Activated CD4-positive, alpha-beta T cell treated with anti-CD3 and anti-CD28 coated beads, Interleukin-2, amount 10 ng/mL, durations not matched to agents 24 days and 14 days (primary cell): ENCODE measurements at regions of chr5 and their contacts with region 1.

Region 1: DNA sequence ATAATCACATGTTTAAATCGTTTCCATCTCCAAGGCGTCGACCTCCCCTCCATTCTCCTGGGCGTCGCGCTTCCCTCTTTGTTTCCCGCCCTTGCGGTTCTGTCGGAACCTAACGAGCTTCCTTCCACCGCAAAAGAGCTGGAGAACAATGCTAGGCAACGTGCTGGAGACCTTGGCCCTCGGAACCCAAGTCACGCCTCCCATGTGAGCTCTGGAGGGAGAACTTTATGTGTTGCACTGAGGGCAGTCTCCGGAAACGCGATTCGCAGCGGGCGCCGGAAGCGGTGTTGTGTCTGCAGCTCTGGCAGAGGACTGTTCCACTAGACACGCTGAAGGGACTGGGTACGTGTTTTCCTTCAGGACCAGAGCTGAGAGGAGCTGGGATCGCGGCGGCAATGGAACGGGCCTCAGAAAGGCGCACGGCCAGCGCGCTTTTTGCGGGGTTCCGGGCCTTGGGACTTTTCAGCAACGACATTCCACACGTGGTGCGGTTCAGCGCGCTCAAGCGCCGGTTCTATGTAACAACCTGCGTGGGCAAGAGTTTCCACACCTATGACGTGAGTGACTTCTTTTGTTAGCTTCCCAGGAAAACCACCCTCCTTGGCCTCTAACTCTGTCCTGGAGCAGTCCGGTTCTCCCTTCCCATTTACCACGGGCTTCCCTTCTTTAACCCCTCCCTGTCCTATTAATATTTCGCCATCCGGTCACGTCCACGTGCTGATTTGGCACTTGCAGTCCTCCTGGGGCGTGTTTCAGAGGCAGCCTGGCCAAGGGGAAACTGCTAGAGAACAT is at the start of gene WDR36:
- DNase-seq: peak; percentile 97
- H3K4me3 Mint-ChIP-seq: peak within 1 kb of the TSS; percentile 96
- H3K27ac Mint-ChIP-seq: peak within 1 kb of the TSS; percentile 98
- H3K4me1 Mint-ChIP-seq: peaks cover 22% of the 10 kb centered on the region
- H3K27me3 Mint-ChIP-seq: peaks cover 2% of the 10 kb centered on the region
- total RNA-seq, gene WDR36: 90.1 and 97.7 TPM in 2 replicates

Region 2: DNA sequence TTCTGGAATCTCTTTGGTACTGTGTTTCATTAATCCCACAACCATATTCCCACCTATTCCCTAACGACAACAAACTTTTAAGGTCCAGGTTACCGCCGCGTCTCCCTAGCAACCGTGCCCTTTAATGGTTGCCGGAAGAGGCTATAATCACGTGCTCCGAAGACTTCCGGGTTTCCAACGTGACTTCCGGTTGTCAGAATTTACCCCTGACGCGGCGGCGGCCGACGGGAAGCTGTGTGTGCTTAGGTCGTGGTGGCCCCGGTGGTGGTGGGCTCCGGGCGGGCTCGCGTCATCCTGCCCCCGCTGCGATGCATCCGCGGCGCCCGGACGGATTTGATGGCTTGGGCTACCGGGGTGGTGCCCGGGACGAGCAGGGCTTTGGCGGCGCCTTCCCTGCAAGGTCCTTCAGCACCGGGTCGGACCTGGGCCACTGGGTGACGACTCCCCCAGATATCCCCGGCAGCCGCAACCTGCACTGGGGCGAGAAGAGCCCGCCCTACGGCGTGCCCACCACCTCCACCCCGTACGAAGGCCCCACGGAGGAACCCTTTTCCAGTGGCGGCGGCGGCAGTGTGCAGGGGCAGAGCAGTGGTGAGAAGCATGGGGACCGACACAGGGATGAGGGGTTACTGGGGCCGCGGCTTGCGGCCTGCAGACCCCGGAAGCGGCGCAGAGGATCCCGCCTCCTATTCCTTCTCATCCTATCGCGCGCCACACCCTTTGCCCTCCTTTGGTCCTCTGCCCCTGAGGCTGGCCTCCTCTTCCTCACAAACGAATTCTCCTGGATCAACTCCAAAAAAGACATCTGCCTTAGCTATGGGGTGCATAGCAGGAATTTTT is 353.2 kb before region 1 on chr5 and contains the start of gene SLC25A46:
- intact Hi-C with region 1: loop called (anchors 1 kb)
- DNase-seq: peak; percentile 97
- H3K4me3 Mint-ChIP-seq: peak within 1 kb of the TSS; percentile 97
- H3K27ac Mint-ChIP-seq: peak within 1 kb of the TSS; percentile 96
- H3K4me1 Mint-ChIP-seq: peaks cover 24% of the 10 kb centered on the region
- H3K27me3 Mint-ChIP-seq: peaks cover 14% of the 10 kb centered on the region
- total RNA-seq, gene SLC25A46: 47.0 and 49.4 TPM in 2 replicates

Region 3: GRCh38 chr5:110751902-110752762 is 340.1 kb before region 1 on chr5:
- intact Hi-C with region 1: loop called (anchors 1 kb)
- DNase-seq: peak; percentile 85
- H3K4me3 Mint-ChIP-seq: peak overlapping the region; percentile 62
- H3K27ac Mint-ChIP-seq: peak overlapping the region; percentile 93
- H3K4me1 Mint-ChIP-seq: peaks cover 42% of the 10 kb centered on the region
- H3K27me3 Mint-ChIP-seq: no peaks in the 10 kb centered on the region

Region 4: GRCh38 chr5:111004286-111004685 is 88.0 kb before region 1 on chr5:
- intact Hi-C with region 1: no loop called
- DNase-seq: no peak
- H3K4me3 Mint-ChIP-seq: no peak overlapping the region
- H3K27ac Mint-ChIP-seq: no peak overlapping the region
- H3K4me1 Mint-ChIP-seq: no peaks in the 10 kb centered on the region
- H3K27me3 Mint-ChIP-seq: peaks cover 3% of the 10 kb centered on the region

Region 5: DNA sequence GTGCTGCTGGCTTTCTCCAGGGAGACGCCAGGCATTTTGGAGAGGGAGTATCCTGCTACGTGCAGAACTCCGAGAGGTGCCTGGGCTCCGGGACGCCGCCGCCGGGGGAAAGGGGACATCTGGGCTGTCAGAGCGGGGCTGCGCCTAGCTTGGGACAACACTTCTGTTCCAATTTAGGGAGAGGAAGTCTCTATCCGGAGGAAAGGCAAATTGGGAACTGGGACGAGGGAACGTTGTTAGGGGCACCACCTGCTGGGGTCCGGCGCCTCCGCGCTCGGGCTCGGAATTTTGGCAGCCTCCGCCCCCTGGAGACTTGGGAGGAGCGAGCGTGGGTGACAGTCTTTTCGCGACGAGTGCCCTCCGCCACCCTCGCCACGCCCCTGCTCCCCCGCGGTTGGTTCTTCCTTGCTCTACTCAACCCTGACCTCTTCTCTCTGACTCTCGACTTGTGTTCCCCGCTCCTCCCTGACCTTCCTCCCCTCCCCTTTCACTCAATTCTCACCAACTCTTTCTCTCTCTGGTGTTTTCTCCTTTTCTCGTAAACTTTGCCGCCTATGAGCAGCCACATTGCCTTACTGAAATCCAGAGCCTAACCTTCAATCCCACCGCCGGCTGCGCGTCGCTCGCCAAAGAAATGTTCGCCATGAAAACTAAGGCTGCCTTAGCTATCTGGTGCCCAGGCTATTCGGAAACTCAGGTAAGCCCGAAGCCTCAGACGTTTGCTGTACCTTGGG is 19.1 kb before region 1 on chr5:
- intact Hi-C with region 1: loop called (anchors 2 kb)
- DNase-seq: peak; percentile 88
- H3K4me3 Mint-ChIP-seq: peak overlapping the region; percentile 93
- H3K27ac Mint-ChIP-seq: no peak overlapping the region
- H3K4me1 Mint-ChIP-seq: peaks cover 22% of the 10 kb centered on the region
- H3K27me3 Mint-ChIP-seq: peaks cover 71% of the 10 kb centered on the region

Region 6: GRCh38 chr5:111119856-111120255 is 27.6 kb after region 1 on chr5:
- intact Hi-C with region 1: loop called (anchors 2 kb)
- DNase-seq: no peak
- H3K4me3 Mint-ChIP-seq: no peak overlapping the region
- H3K27ac Mint-ChIP-seq: no peak overlapping the region
- H3K4me1 Mint-ChIP-seq: peaks cover 22% of the 10 kb centered on the region
- H3K27me3 Mint-ChIP-seq: no peaks in the 10 kb centered on the region

Region 7: DNA sequence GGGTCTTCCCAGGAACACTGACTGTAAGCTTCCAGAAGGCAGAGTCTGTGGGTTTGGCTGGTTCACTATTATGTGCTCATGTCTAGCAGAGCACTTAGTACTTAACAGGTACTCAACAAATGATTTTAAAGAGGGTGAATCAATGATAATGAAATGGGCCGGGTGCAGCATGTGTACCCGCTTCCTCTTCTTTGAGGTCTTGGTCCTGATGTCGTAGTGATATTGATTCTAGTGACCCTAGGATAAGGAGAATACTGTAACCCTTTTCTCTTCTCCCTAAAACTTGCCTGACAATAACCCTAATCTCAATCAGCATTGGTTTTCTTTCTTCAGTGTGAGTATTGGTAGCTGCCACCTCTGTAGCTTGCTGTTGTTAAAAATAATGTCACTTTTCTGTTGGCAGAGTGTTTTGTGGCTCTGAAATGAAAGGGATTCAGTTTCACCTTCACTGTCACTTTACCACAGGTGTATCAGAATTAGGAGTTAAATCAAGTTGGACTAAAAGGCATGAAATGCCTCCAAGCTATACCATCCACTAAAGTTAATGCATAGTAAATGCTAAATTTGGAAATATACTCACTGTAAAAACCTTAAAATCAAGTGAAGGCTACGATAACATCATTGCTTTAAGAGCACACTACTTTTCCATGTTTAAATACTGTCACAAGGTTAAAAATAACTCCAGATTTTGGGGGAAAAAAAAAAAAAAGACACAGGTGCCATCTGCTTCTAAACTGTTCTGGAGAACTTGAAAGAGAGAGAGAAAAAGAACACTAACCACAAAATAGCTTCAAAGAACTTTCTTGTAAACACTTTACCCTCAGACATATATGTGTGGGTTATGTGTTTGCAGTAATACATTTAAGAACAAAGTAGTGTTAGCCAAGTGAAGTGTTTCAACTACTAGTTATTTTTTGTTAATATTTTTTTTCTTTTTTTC is 137.9 kb after region 1 on chr5:
- intact Hi-C with region 1: loop called (anchors 5 kb)
- DNase-seq: peak; percentile 75
- H3K4me3 Mint-ChIP-seq: peak overlapping the region; percentile 86
- H3K27ac Mint-ChIP-seq: peak overlapping the region; percentile 98
- H3K4me1 Mint-ChIP-seq: peaks cover 74% of the 10 kb centered on the region
- H3K27me3 Mint-ChIP-seq: no peaks in the 10 kb centered on the region

Region 8: DNA sequence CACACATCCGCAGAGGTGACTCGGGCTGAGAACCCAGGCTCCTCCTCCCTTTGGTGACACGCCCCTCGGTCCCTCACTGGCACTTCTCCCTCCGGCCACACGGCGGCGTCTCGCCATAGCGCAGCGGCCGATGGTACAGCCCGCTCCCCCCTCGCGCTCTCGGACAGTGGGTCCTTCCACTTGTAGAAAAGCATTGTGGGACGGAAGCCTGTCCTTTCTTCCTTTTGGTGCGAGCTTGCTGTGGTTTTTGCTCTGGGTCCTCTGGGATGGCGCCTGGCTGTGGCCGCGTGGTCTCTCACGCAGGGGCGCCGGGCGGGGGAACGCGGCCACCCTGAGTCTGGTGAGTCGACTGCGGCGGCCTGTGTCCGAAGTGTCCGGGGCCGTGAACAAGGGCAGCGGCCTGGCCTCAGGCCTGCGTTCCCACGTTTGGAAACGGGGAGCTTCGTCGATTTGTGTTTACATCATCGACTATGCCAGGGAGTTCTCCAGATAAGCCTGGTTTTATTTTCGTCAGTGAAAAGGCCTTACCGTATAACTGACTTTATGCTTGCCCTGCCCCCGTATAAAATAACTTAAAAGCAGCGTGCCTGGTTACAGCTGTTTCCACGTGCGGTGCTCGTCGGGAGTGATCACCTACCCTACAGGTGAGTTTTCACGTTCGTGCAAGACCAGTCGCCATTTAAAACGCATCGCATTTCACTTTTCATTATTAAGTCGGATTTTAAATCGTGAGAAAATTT is 1068.6 kb after region 1 on chr5:
- intact Hi-C with region 1: loop called (anchors 5 kb)
- DNase-seq: peak; percentile 98
- H3K4me3 Mint-ChIP-seq: peak overlapping the region; percentile 96
- H3K27ac Mint-ChIP-seq: peak overlapping the region; percentile 94
- H3K4me1 Mint-ChIP-seq: peaks cover 25% of the 10 kb centered on the region
- H3K27me3 Mint-ChIP-seq: peaks cover 2% of the 10 kb centered on the region